ENCODE measurements at regions of chr20 and their contacts with region 1.

Region 1: DNA sequence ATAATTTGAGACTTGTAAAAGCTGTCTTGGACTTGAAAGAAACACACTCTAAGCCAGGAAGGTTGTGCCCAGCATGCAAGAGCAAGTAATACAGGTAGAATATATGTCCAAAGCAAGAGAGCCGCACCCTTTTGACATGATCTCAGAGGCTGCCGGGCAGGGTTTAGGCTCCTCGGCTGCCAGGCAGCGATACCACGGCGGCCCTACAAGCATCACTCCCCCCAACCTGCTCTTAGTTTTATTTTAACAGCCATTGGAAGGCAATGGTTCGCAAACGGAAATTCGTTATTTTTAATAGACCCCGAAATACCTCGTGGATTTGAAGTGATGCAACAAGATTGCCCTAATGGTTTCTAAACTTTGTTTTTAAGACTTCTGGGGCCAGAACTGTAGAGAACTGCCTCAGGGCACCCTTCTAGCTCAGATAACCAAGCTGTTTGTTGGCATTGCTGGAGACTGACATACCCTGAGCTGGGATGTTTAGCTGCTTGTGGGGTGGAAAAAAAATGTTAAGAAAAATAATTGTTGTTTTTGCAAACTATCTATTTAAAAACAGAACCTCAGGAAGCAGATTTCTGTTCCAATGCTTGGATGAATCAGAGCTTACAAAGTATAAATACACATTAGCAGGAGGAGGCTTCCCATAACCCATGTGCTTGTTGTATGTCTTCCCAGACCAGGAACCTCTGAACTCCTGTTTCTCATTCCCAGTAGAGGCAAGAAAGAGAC is 39.0 kb downstream of the JAG1 start:
- DNase-seq: no peak
- ATAC-seq: no peak

Region 2: GRCh38 chr20:10558635-10559187 is 76.1 kb before region 1 on chr20:
- intact Hi-C with region 1: loop called (anchors 2 kb)
- DNase-seq: no peak
- ATAC-seq: no peak